ENCODE measurements at regions of chr12 and their contacts with region 1.

Region 1: GRCh38 chr12:121626087-121626852 is at the start of gene ORAI1:
- DNase-seq: peak; percentile 94
- H3K4me3 Mint-ChIP-seq: peak within 1 kb of the TSS; percentile 90
- H3K27ac Mint-ChIP-seq: peak within 1 kb of the TSS; percentile 90
- H3K4me1 Mint-ChIP-seq: peaks cover 40% of the 10 kb centered on the region
- H3K27me3 Mint-ChIP-seq: no peaks in the 10 kb centered on the region
- total RNA-seq, gene ORAI1: 47.6 and 52.6 TPM in 2 replicates

Region 2: GRCh38 chr12:121388421-121388981 is 237.8 kb before region 1 on chr12:
- intact Hi-C with region 1: no loop called
- DNase-seq: no peak
- H3K4me3 Mint-ChIP-seq: no peak overlapping the region
- H3K27ac Mint-ChIP-seq: peak overlapping the region; percentile 1
- H3K4me1 Mint-ChIP-seq: peaks cover 14% of the 10 kb centered on the region
- H3K27me3 Mint-ChIP-seq: peaks cover 2% of the 10 kb centered on the region

Region 3: GRCh38 chr12:121499929-121500793 is 126.1 kb before region 1 on chr12:
- intact Hi-C with region 1: loop called (anchors 2 kb)
- DNase-seq: peak; percentile 46
- H3K4me3 Mint-ChIP-seq: no peak overlapping the region
- H3K27ac Mint-ChIP-seq: no peak overlapping the region
- H3K4me1 Mint-ChIP-seq: peaks cover 3% of the 10 kb centered on the region
- H3K27me3 Mint-ChIP-seq: no peaks in the 10 kb centered on the region

Region 4: DNA sequence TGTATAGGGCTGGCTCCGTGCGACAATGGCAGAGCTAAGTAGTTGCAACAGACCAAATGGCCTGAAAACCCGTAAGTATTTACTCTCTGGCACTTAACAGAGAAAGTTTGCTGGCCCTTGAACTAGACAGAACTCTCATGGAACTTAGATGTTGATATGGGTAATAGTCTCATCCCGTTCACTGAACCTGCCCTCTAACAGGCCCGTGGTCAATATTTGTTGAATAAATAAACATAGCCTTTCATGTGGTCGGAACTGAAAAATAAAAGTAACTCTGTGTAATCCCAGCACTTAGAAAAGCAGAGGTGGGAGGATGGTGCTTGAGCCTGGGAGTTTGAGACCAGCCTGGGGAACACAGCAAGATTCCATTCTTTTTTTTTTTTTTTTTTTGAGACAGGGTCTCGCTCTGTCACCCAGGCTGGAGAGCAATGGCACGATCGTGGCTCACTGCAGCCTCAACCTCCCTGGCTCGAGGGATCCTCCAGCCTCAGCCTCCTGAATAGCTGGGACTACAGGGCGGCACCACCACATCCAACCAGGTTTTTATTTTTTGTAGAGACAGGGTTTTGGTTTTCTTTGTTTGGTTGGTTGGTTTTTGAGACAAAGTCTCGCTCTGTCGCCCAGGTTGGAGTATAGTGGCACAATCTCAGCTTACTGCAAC is 75.2 kb before region 1 on chr12:
- intact Hi-C with region 1: loop called (anchors 1 kb)
- DNase-seq: no peak
- H3K4me3 Mint-ChIP-seq: no peak overlapping the region
- H3K27ac Mint-ChIP-seq: no peak overlapping the region
- H3K4me1 Mint-ChIP-seq: peaks cover 2% of the 10 kb centered on the region
- H3K27me3 Mint-ChIP-seq: no peaks in the 10 kb centered on the region

Region 5: GRCh38 chr12:121590476-121591143 is 35.7 kb before region 1 on chr12:
- intact Hi-C with region 1: loop called (anchors 1 kb)
- DNase-seq: peak; percentile 68
- H3K4me3 Mint-ChIP-seq: peak overlapping the region; percentile 76
- H3K27ac Mint-ChIP-seq: peak overlapping the region; percentile 97
- H3K4me1 Mint-ChIP-seq: peaks cover 31% of the 10 kb centered on the region
- H3K27me3 Mint-ChIP-seq: no peaks in the 10 kb centered on the region

Region 6: DNA sequence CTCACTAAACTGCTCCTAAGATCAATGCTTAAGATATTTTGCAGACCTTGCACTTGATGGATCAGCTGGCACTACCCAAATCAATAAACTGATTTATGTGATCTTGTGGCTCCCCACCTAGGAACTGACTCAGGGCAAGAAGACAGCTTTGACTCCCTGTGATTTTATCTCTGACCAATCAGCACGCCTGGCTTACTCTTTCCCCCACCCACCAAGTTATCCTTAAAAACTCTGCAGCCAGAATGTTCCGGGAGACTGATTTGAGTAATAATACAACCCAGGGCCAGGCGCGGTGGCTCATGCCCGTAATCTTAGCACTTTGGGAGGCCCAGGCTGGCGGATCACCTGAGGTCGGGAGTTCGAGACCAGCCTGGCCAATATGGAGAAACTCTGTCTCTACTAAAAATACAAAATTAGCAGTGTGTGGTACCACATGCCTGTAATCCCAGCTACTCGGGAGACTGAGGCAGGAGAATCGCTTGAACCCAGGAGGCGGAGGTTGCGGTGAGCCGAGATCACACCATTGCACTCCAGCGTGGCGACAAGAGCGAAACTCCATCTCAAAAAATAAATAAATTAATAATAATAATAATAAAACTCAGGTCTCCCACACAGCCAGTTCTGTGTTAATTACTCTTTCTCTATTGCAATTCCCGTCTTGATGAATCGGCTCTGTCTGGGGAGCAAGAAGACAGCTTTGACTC is 31.2 kb after region 1 on chr12:
- intact Hi-C with region 1: loop called (anchors 1 kb)
- DNase-seq: no peak
- H3K4me3 Mint-ChIP-seq: peak overlapping the region; percentile 1
- H3K27ac Mint-ChIP-seq: peak overlapping the region; percentile 60
- H3K4me1 Mint-ChIP-seq: peaks cover 51% of the 10 kb centered on the region
- H3K27me3 Mint-ChIP-seq: no peaks in the 10 kb centered on the region

Region 7: GRCh38 chr12:121678716-121679580 is 52.7 kb after region 1 on chr12:
- intact Hi-C with region 1: loop called (anchors 1 kb)
- DNase-seq: no peak
- H3K4me3 Mint-ChIP-seq: no peak overlapping the region
- H3K27ac Mint-ChIP-seq: no peak overlapping the region
- H3K4me1 Mint-ChIP-seq: peaks cover 2% of the 10 kb centered on the region
- H3K27me3 Mint-ChIP-seq: no peaks in the 10 kb centered on the region

Region 8: GRCh38 chr12:121793838-121794533 is 167.7 kb after region 1 on chr12:
- intact Hi-C with region 1: loop called (anchors 5 kb)
- DNase-seq: peak; percentile 96
- H3K4me3 Mint-ChIP-seq: peak overlapping the region; percentile 84
- H3K27ac Mint-ChIP-seq: peak overlapping the region; percentile 94
- H3K4me1 Mint-ChIP-seq: peaks cover 57% of the 10 kb centered on the region
- H3K27me3 Mint-ChIP-seq: no peaks in the 10 kb centered on the region

Region 9: DNA sequence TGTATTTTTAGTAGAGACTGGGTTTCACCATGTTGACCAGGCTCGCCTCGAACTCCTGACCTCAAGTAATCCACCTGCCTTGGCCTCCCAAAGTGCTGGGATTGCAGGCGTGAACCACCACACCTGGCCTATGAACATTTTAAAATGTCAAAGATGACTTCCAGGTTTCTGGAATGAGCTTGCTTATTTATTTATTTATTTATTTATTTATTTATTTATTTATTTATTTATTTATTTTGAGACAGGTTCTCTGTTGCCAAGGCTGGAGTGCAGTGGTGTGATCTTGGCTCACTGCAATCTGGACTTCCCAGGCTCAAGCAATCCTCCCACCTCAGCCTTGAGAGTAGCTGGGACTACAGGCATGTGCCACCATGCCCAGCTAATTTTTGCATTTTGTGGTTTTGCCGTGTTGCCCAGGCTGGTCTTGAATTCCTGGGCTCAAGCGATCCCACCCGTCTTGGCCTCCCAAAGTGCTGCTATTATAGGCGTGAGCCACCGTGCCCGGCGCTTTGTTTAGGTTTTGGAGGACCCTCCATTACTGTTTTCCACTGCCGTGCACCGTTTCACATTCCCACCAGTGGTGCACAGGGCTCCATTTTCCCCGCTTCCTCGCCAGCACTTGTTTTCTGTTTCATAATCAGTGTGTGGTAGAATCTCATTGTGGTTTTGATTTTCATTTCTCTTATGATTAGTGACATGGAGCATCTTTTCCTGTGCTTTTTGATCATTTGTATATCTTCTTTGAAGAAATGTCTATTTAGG is 285.7 kb after region 1 on chr12:
- intact Hi-C with region 1: no loop called
- DNase-seq: no peak
- H3K4me3 Mint-ChIP-seq: no peak overlapping the region
- H3K27ac Mint-ChIP-seq: peak overlapping the region; percentile 52
- H3K4me1 Mint-ChIP-seq: peaks cover 11% of the 10 kb centered on the region
- H3K27me3 Mint-ChIP-seq: no peaks in the 10 kb centered on the region